ENCODE measurements at regions of chr11 and their contacts with region 1.

Region 1: DNA sequence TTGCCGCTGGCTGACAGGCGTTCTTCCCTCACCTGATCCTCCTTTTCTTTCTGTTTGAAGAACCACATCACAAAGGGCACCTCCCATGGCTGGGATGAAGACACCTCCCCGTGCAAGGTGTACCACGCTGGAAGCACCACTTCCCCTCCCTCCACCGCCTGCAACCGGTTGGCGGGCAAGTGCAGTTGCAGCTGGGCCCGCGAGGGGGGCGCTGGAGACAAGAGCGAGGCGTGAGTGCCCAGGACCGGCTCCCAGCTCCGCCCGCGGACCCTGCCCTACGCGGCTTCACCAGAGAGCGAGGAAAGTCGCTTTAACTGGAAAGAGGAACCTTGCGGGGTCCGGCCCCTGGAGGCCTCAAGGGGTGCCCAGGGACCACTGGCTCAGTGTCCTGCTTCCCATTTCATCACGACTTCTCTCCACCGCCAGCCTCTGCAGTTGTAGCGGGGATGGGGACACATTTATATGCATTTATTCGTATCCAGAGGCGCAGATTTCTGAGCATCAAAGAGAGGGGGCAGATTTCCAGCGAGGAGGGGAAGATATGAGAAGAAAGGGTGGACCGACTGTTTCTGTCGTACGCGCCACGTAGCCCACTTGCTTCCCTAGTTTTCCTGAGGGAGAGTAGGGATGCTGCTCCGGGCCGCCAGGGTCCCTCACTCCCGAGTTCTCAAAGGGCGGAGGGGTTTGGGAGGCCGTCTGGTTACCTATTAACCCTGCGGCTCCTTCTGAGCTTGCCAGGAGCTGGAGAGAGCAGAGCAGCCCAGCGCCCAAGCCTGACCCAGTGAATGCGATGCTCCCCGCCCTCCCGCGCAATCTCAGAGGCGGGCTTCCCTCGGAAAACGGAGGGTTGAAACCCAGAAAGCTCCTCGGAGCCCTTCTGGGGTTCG is 3.5 kb downstream of the ESAM start:
- DNase-seq: no peak
- H3K4me3 ChIP-seq: peak overlapping the region; percentile 39
- CTCF ChIP-seq: peak; percentile 88

Region 2: GRCh38 chr11:124662106-124662505 is 96.5 kb before region 1 on chr11:
- CTCF ChIA-PET with region 1: interaction called, 27 read pairs
- POLR2A ChIA-PET with region 1: no interaction called
- DNase-seq: no peak
- H3K4me3 ChIP-seq: no peak overlapping the region
- CTCF ChIP-seq: no peak

Region 3: GRCh38 chr11:124746621-124747243 is 11.8 kb before region 1 on chr11:
- CTCF ChIA-PET with region 1: interaction called, 50 read pairs
- POLR2A ChIA-PET with region 1: no interaction called
- DNase-seq: no peak
- H3K4me3 ChIP-seq: peak overlapping the region; percentile 64
- CTCF ChIP-seq: peak; percentile 70

Region 4: GRCh38 chr11:124778281-124778680 is 19.7 kb after region 1 on chr11:
- CTCF ChIA-PET with region 1: interaction called, 331 read pairs
- POLR2A ChIA-PET with region 1: no interaction called
- DNase-seq: no peak
- H3K4me3 ChIP-seq: no peak overlapping the region
- CTCF ChIP-seq: no peak

Region 5: DNA sequence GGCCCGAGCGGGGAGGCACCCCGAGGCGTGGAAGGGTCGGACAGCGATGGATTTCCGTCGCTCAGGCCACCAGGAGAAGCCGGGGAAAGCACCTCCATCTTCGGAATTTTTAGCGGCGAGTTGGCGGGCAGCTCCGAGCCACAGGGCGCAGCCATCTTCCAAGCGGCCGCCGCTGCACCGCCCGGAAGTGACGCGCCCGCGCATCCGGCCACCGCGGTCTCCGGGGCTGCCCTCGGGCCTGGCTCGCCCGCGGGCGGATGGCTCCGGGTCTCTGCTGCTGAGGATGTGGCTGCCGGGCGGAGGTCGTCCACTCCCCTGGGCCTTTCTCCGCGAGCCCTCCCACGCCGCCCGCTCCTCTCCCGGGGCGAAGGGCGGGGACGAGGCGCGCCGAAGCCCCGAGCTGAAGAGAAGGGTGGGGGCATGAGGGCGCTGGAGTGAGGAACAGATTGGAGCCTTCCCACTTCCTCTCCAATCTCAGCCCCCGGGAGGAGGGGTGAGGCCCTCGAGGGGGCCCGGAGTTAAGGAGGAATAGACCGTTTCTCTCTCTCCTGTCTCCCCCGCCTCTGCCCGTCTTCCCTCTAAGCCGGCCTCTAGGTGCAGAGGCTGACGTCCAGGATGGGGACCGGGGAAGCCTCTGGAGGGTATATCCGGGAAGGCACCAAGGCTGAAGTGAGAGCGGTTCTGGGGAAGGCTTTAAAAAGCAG is 41.8 kb after region 1 on chr11 and contains the start of gene MSANTD2:
- CTCF ChIA-PET with region 1: interaction called, 331 read pairs
- POLR2A ChIA-PET with region 1: no interaction called
- DNase-seq: peak; percentile 17
- H3K4me3 ChIP-seq: peak within 1 kb of the TSS; percentile 82
- CTCF ChIP-seq: no peak

Region 6: DNA sequence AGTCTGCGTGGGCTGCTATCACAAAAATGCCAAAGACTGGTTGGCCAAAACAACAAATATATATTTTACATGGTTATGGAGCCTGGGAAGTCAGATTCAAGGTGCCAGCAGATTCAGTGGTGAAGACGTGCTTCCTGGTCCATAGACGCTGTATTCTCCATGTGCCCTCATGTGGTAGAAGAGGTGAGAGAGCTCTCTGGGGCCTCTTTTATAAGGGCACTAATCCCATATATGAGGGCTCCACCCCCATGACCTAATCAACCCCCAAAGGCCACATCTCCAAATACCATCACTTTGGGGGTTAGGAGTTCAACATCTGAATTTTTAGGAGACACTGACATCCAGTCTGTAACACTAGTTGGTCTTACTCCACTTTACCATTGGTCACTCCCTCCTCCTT is 96.9 kb after region 1 on chr11:
- CTCF ChIA-PET with region 1: no interaction called
- POLR2A ChIA-PET with region 1: no interaction called
- DNase-seq: no peak
- H3K4me3 ChIP-seq: no peak overlapping the region
- CTCF ChIP-seq: no peak